GM13976 (cell line): ENCODE measurements at regions of chr1 and their contacts with region 1.

Region 1: GRCh38 chr1:108559215-108560186 is at the start of gene EEIG2:
- DNase-seq: peak; percentile 91
- CTCF ChIP-seq: peak; percentile 94

Region 2: DNA sequence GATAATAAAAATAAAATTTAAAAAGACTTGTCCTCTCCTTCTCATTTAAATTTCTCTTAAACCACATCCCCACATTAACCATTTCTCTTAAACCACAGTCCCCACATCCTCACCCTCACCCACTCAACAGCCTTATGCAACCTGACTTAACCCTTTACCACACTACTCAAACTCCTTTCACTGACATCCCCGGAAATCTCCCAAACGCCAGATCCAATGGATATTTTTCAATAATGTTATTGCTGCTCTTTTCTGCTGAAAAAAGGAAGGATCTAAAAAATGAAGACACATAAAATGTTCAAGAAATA is 53.8 kb before region 1 on chr1:
- in situ Hi-C with region 1: loop called (anchors 5 kb)
- DNase-seq: no peak
- CTCF ChIP-seq: no peak